ENCODE measurements at regions of chr20 and their contacts with region 1.

Region 1: DNA sequence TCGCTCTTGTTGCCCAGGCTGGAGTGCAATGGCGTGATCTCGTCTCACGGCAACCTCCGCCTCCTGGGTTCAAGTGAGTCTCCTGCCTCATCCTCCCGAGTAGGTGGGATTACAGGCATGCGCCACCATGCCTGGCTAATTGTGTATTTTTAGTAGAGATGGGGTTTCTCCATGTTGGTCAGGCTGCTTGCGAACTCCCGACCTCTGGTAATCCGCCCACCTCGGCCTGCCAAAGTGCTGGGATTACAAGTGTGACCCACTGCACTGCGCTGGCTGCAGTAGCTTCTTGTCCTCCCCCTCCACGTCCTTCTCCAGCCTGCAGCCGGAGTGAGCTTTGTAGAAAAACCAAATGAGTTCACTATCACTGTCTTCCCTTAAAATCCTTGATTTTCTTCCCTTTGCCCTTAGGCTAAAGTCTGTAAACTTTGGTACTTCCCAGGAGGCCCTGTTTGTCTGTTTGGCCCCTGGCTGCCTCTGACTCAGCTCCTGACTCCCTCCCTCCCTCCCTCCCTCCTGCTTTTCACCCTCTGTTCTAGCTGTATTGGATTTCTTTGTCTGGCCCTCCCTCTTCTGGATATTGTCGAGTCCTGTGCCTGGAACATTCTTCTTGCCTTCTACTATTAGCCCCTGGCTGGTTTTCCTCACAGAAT is 12.9 kb downstream of the PARD6B start:
- DNase-seq: peak; percentile 72 to 83
- H3K4me3 ChIP-seq: no peak overlapping the region
- H3K27ac ChIP-seq: peak overlapping the region; percentile 76
- H3K4me1 ChIP-seq: peaks cover 94% of the 10 kb centered on the region
- H3K27me3 ChIP-seq: no peaks in the 10 kb centered on the region
- CTCF ChIP-seq: peak; percentile 68

Region 2: GRCh38 chr20:50426866-50427739 is 317.2 kb before region 1 on chr20:
- CTCF ChIA-PET with region 1: no interaction called
- POLR2A ChIA-PET with region 1: interaction called, 16 read pairs
- intact Hi-C with region 1: no loop called
- DNase-seq: no peak
- H3K4me3 ChIP-seq: no peak overlapping the region
- H3K27ac ChIP-seq: no peak overlapping the region
- H3K4me1 ChIP-seq: peaks cover 50% of the 10 kb centered on the region
- H3K27me3 ChIP-seq: no peaks in the 10 kb centered on the region
- CTCF ChIP-seq: no peak

Region 3: GRCh38 chr20:50588034-50588611 is 156.1 kb before region 1 on chr20:
- CTCF ChIA-PET with region 1: no interaction called
- POLR2A ChIA-PET with region 1: no interaction called
- intact Hi-C with region 1: loop called (anchors 5 kb)
- DNase-seq: peak; percentile 53 to 78
- H3K4me3 ChIP-seq: no peak overlapping the region
- H3K27ac ChIP-seq: no peak overlapping the region
- H3K4me1 ChIP-seq: no peaks in the 10 kb centered on the region
- H3K27me3 ChIP-seq: no peaks in the 10 kb centered on the region
- CTCF ChIP-seq: peak; percentile 98

Region 4: DNA sequence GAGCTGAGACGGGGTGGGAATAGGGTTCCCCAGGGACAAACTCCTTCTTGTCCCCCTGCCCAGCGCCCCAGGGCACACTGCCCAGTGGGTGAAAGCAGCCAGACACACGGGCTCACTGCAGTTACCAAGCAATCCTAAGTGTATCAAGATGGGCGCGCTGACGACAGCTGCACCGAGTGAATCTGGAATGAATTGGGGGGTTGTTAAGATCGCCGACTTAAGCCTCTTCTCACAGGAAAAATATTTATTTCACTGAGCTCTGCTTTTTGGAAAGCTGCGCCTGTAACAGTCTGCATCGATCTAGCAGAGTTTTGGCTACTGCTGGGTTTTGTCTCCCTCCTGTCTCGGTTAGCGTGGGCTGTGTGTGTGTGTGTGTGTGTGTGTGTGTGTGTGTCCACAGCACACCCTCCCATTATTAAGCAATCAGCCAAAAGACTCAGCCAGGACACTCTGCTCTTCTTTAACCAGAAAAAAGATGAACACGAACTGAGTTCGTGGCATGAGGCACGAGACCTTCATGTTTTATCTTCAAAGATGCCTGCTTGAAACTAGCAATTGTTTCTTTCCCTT is 88.9 kb before region 1 on chr20:
- CTCF ChIA-PET with region 1: interaction called, 7 read pairs
- POLR2A ChIA-PET with region 1: no interaction called
- intact Hi-C with region 1: loop called (anchors 1 kb)
- DNase-seq: no peak
- H3K4me3 ChIP-seq: no peak overlapping the region
- H3K27ac ChIP-seq: no peak overlapping the region
- H3K4me1 ChIP-seq: peaks cover 29% of the 10 kb centered on the region
- H3K27me3 ChIP-seq: no peaks in the 10 kb centered on the region
- CTCF ChIP-seq: no peak

Region 5: DNA sequence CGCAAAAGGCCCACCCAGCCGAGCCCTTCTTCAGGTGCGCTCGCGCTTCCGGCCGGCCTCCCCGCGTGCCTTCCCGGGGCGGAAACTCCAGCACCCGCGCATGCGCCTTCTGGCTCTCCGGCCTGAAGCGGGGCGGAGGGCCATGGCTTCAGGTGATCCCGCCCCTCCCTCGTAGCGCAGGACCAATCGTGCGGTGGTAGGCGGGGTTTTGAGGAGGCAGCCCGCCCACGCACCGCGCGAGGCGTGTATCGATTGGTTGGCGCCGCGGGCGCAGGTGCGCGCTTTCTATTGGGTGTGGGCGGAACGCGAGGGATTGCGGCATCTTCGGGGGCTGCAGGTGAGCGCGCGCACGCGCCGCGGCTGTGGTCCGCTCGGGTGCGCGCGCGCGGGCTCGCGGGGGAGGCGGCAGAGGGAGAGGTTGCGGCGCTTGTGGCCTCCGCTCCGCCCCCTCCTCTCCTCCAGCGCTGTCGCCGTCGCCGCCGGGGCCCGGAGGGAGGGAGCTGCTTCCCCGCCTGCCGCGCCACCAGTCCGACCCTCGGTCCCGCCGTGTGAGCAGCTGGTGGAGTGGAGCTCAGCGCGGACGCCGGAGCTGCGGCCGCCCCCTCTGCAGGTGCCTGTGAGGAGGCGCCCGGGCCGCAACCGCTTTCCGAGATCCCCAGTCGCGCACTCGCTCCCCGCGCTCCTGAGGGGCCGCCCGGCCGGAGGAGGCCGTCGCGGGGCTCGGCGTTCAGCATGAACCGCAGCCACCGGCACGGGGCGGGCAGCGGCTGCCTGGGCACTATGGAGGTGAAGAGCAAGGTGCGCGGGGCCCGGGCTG is 13.0 kb before region 1 on chr20 and contains the start of gene PARD6B:
- CTCF ChIA-PET with region 1: interaction called, 8 read pairs
- POLR2A ChIA-PET with region 1: interaction called, 11 read pairs
- intact Hi-C with region 1: no loop called
- DNase-seq: peak; percentile 96 to 100
- H3K4me3 ChIP-seq: peak within 1 kb of the TSS; percentile 85
- H3K27ac ChIP-seq: peak within 1 kb of the TSS; percentile 91
- H3K4me1 ChIP-seq: peaks cover 71% of the 10 kb centered on the region
- H3K27me3 ChIP-seq: no peaks in the 10 kb centered on the region
- CTCF ChIP-seq: no peak
- total RNA-seq, gene PARD6B: 52.2 and 80.3 TPM in 2 replicates

Region 6: GRCh38 chr20:50776122-50776817 is 32.0 kb after region 1 on chr20:
- CTCF ChIA-PET with region 1: no interaction called
- POLR2A ChIA-PET with region 1: no interaction called
- intact Hi-C with region 1: no loop called
- DNase-seq: no peak
- H3K4me3 ChIP-seq: no peak overlapping the region
- H3K27ac ChIP-seq: no peak overlapping the region
- H3K4me1 ChIP-seq: no peaks in the 10 kb centered on the region
- H3K27me3 ChIP-seq: no peaks in the 10 kb centered on the region
- CTCF ChIP-seq: no peak

Measured in PC-9 (cell line).